ENCODE measurements at regions of chr22 and their contacts with region 1.

Region 1: GRCh38 chr22:31970490-31971444 is 26.4 kb downstream of the YWHAH start:
- DNase-seq: peak; percentile 93
- ATAC-seq: peak; percentile 92
- H3K4me3 Mint-ChIP-seq: peak overlapping the region; percentile 91
- H3K27ac Mint-ChIP-seq: no peak overlapping the region
- H3K4me1 Mint-ChIP-seq: peaks cover 3% of the 10 kb centered on the region; the same call in 1 of the 2 replicates
- H3K27me3 Mint-ChIP-seq: peaks cover 6% of the 10 kb centered on the region; the same call in 1 of the 2 replicates
- CTCF ChIP-seq: peak; percentile 98

Region 2: GRCh38 chr22:31630331-31631329 is 340.1 kb before region 1 on chr22:
- CTCF ChIA-PET with region 1: interaction called, 18 read pairs
- POLR2A ChIA-PET with region 1: no interaction called
- DNase-seq: peak; percentile 86
- ATAC-seq: peak; percentile 78
- H3K4me3 Mint-ChIP-seq: peak overlapping the region; percentile 85
- H3K27ac Mint-ChIP-seq: peak overlapping the region; percentile 68; the same call in 1 of the 2 replicates
- H3K4me1 Mint-ChIP-seq: peaks cover 31% of the 10 kb centered on the region
- H3K27me3 Mint-ChIP-seq: no peaks in the 10 kb centered on the region
- CTCF ChIP-seq: no peak

Region 3: GRCh38 chr22:31790240-31790639 is 180.5 kb before region 1 on chr22:
- CTCF ChIA-PET with region 1: interaction called, 11 read pairs
- POLR2A ChIA-PET with region 1: no interaction called
- DNase-seq: no peak
- ATAC-seq: no peak
- H3K4me3 Mint-ChIP-seq: no peak overlapping the region
- H3K27ac Mint-ChIP-seq: 0 out of 2 replicates have a peak overlapping the region, but pooled peaks have one; percentile 45
- H3K4me1 Mint-ChIP-seq: no peaks in the 10 kb centered on the region
- H3K27me3 Mint-ChIP-seq: no peaks in the 10 kb centered on the region
- CTCF ChIP-seq: no peak

Region 4: GRCh38 chr22:31857247-31857646 is 113.5 kb before region 1 on chr22:
- CTCF ChIA-PET with region 1: interaction called, 53 read pairs
- POLR2A ChIA-PET with region 1: no interaction called
- DNase-seq: peak; percentile 76
- ATAC-seq: peak; percentile 100
- H3K4me3 Mint-ChIP-seq: no peak overlapping the region; the same call in 1 of the 2 replicates
- H3K27ac Mint-ChIP-seq: peak overlapping the region; percentile 37
- H3K4me1 Mint-ChIP-seq: peaks cover 10% of the 10 kb centered on the region
- H3K27me3 Mint-ChIP-seq: no peaks in the 10 kb centered on the region
- CTCF ChIP-seq: no peak

Region 5: GRCh38 chr22:31929167-31929930 is 41.4 kb before region 1 on chr22:
- CTCF ChIA-PET with region 1: interaction called, 13 read pairs
- POLR2A ChIA-PET with region 1: interaction called, 5 read pairs
- DNase-seq: no peak
- ATAC-seq: no peak
- H3K4me3 Mint-ChIP-seq: no peak overlapping the region
- H3K27ac Mint-ChIP-seq: no peak overlapping the region
- H3K4me1 Mint-ChIP-seq: no peaks in the 10 kb centered on the region
- H3K27me3 Mint-ChIP-seq: no peaks in the 10 kb centered on the region
- CTCF ChIP-seq: no peak

Region 6: GRCh38 chr22:32042924-32043790 is 72.4 kb after region 1 on chr22 and contains the start of gene SLC5A1:
- CTCF ChIA-PET with region 1: interaction called, 25 read pairs
- POLR2A ChIA-PET with region 1: no interaction called
- DNase-seq: peak; percentile 12
- ATAC-seq: no peak; the same call in 1 of the 2 replicates
- H3K4me3 Mint-ChIP-seq: no peak within 1 kb of the TSS
- H3K27ac Mint-ChIP-seq: no peak within 1 kb of the TSS
- H3K4me1 Mint-ChIP-seq: peaks cover 3% of the 10 kb centered on the region; the same call in 1 of the 2 replicates
- H3K27me3 Mint-ChIP-seq: peaks cover 21% of the 10 kb centered on the region
- CTCF ChIP-seq: no peak
- total RNA-seq, gene SLC5A1: not detected in 3 replicates

Region 7: GRCh38 chr22:32106930-32107329 is 136.2 kb after region 1 on chr22:
- CTCF ChIA-PET with region 1: interaction called, 14 read pairs
- POLR2A ChIA-PET with region 1: no interaction called
- DNase-seq: peak; percentile 68
- ATAC-seq: peak; percentile 64; the same call in 1 of the 2 replicates
- H3K4me3 Mint-ChIP-seq: no peak overlapping the region
- H3K27ac Mint-ChIP-seq: no peak overlapping the region
- H3K4me1 Mint-ChIP-seq: no peaks in the 10 kb centered on the region
- H3K27me3 Mint-ChIP-seq: peaks cover 4% of the 10 kb centered on the region
- CTCF ChIP-seq: no peak

Region 8: GRCh38 chr22:32579509-32580234 is 608.9 kb after region 1 on chr22:
- CTCF ChIA-PET with region 1: no interaction called
- POLR2A ChIA-PET with region 1: no interaction called
- DNase-seq: no peak
- ATAC-seq: no peak
- H3K4me3 Mint-ChIP-seq: no peak overlapping the region
- H3K27ac Mint-ChIP-seq: no peak overlapping the region
- H3K4me1 Mint-ChIP-seq: peaks cover 8% of the 10 kb centered on the region
- H3K27me3 Mint-ChIP-seq: no peaks in the 10 kb centered on the region
- CTCF ChIP-seq: no peak

Measured in WTC11 (cell line).